ENCODE measurements at regions of chrX and their contacts with region 1.

Region 1: GRCh38 chrX:21985332-21985777 is 44.8 kb downstream of the SMS start:
- DNase-seq: peak; percentile 69
- H3K4me3 ChIP-seq: no peak overlapping the region
- H3K27ac ChIP-seq: no peak overlapping the region
- H3K4me1 ChIP-seq: peaks cover 4% of the 10 kb centered on the region
- H3K27me3 ChIP-seq: no peaks in the 10 kb centered on the region
- CTCF ChIP-seq: peak; percentile 91 to 99

Region 2: GRCh38 chrX:22081475-22082092 is 96.2 kb after region 1 on chrX:
- CTCF ChIA-PET with region 1: no interaction called
- dilution Hi-C with region 1: no loop called
- in situ Hi-C with region 1: no loop called
- intact Hi-C with region 1: loop called (anchors 10 kb)
- DNase-seq: peak; percentile 43
- H3K4me3 ChIP-seq: no peak overlapping the region
- H3K27ac ChIP-seq: no peak overlapping the region
- H3K4me1 ChIP-seq: no peaks in the 10 kb centered on the region
- H3K27me3 ChIP-seq: no peaks in the 10 kb centered on the region
- CTCF ChIP-seq: peak; percentile 87 to 94

Region 3: GRCh38 chrX:22748093-22748999 is 763.0 kb after region 1 on chrX:
- CTCF ChIA-PET with region 1: no interaction called
- dilution Hi-C with region 1: no loop called
- in situ Hi-C with region 1: loop called in 1 of 2 experiments (anchors 25 kb)
- intact Hi-C with region 1: loop called (anchors 1 kb)
- DNase-seq: peak; percentile 25
- H3K4me3 ChIP-seq: no peak overlapping the region
- H3K27ac ChIP-seq: no peak overlapping the region
- H3K4me1 ChIP-seq: no peaks in the 10 kb centered on the region
- H3K27me3 ChIP-seq: peaks cover 4% of the 10 kb centered on the region
- CTCF ChIP-seq: peak; percentile 73 to 84

Region 4: GRCh38 chrX:23317799-23318724 is 1332.7 kb after region 1 on chrX:
- CTCF ChIA-PET with region 1: no interaction called
- dilution Hi-C with region 1: no loop called
- in situ Hi-C with region 1: no loop called
- intact Hi-C with region 1: loop called (anchors 5 kb)
- DNase-seq: no peak
- H3K4me3 ChIP-seq: no peak overlapping the region
- H3K27ac ChIP-seq: no peak overlapping the region
- H3K4me1 ChIP-seq: no peaks in the 10 kb centered on the region
- H3K27me3 ChIP-seq: peaks cover 4% of the 10 kb centered on the region
- CTCF ChIP-seq: peak; percentile 92 to 94

Region 5: DNA sequence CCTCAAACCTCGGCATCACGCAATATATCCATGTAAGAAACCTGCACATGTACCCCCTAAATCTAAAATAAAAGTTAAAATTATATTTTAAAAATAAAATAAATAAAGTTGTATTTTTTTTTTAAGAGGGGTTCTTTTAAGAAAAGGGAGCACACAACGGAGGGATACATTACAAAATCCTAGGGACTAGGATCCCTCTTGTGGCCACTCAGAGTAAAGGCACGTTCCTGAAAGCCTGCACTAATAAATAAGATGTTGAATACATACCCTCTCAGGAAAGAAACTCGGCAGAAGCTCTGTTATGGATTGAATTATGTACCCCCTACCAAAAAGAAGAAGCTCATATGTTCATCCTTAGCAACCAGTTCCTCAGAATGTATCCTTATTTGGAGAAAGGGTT is 1631.0 kb after region 1 on chrX:
- CTCF ChIA-PET with region 1: no interaction called
- dilution Hi-C with region 1: no loop called
- in situ Hi-C with region 1: no loop called
- intact Hi-C with region 1: loop called (anchors 2 kb)
- DNase-seq: peak; percentile 4
- H3K4me3 ChIP-seq: no peak overlapping the region
- H3K27ac ChIP-seq: no peak overlapping the region
- H3K4me1 ChIP-seq: no peaks in the 10 kb centered on the region
- H3K27me3 ChIP-seq: peaks cover 3% of the 10 kb centered on the region
- CTCF ChIP-seq: peak; percentile 48 to 74